ENCODE measurements at regions of chr3 and their contacts with region 1.

Region 1: DNA sequence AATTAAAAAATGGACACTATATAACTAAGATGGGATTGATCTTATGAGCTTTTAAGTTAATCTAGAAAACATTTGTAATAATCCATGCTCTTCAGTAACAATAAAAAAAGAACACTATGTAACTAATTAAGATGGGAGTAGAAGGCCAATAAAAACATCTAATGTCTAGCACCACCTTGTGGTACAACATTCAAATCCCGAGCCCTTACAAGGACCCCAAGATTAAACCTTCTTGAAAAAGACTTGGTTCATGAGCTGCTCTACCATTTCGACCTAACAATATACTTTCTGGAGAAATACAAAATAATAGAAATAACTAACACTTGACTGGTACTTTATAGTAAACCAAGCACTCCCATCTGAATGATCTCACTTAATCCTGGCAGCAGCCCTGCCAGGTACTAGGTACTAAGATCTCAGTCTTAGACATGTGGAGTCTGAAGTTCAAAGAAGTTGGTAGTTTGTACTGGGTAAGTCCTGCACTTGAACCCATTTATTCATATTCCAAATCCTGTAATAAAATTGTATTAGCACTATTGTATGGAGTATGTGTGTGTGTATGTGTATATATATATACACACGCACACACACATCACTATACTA is 21.8 kb downstream of the METTL6 start:
- DNase-seq: no peak
- ATAC-seq: peak; percentile 73

Region 2: DNA sequence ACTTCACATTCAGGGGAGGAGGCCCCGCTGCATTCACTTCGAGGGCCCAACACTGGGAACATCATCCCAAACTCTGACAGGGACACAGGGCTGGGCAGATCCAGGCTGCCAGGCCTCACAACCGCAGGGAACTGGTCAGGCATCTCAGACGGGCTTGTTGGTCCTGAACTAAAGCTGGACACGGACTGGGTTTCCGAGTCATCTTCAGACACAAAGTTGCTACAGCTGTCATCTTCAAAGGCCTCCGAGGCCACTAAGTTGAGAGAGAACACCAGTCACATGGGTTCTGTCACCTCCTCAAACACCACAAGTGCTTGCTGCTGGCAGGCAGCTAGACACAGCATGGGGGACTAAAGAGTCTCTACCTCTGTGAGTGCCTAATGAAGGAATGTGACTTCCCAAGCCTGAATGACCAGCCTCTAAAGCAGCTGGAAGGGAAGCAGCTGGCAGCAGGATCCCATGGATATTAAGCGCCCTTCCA is 148.6 kb before region 1 on chr3:
- intact Hi-C with region 1: loop called in 1 of 2 experiments (anchors 10 kb)
- DNase-seq: no peak
- ATAC-seq: no peak

Measured in left colon (tissue), 2 donors.